CD8-positive, alpha-beta memory T cell (primary cell): ENCODE measurements at regions of chr1 and their contacts with region 1.

Region 1: DNA sequence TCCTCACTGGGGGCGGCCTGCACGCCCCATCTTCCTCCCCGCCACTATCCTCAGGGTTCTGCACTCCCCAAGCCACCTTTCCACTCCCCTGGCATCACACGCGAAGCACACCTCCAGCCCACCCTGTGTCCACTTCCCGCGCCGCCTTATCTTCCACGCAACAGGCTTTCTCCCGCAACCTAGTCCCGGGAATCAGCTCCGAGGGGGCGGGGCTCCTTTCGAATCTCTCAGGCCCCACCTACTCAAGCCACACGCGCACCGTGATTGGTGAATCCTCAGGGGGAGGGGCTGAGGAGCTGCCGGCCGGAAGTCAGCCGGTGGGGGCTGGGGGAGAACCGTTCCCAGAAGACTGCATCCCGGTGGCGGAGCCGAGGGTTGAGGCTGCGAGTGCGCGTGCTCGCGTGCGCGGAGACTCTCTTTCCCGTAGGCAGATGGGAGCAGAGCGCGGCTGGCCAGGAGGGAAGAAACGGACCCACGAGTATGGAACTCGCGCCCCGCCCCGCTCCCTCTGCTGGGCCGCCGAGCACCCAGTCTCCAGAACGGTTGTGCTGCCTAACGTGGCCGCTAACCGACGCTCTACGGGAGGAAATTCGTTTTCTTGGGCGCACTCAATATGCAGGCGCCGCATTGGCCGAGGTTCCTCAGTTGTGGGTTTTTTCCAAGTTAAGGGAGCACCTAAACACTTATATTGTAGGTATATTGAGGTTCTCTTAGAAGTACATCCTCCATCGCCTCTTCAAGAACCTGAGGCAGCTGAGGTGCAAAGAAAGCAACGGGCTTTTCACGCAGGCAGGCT is at the start of gene PSRC1:
- DNase-seq: peak; percentile 85 to 93 (median 90)
- H3K4me3 ChIP-seq: peak within 1 kb of the TSS; percentile 65
- H3K4me3 Mint-ChIP-seq: peak within 1 kb of the TSS; percentile 92 to 99 (median 98)
- H3K27ac ChIP-seq: peak within 1 kb of the TSS; percentile 78
- H3K27ac Mint-ChIP-seq: peak within 1 kb of the TSS; percentile 68 to 95 (median 92)
- H3K4me1 ChIP-seq: peaks cover 5% of the 10 kb centered on the region
- H3K4me1 Mint-ChIP-seq: peaks cover 10 to 22% (median 11%) of the 10 kb centered on the region in 3 donors
- H3K27me3 ChIP-seq: no peaks in the 10 kb centered on the region
- H3K27me3 Mint-ChIP-seq: no peaks in the 10 kb centered on the region
- total RNA-seq, gene PSRC1: 5.4 to 5.8 TPM

Region 2: DNA sequence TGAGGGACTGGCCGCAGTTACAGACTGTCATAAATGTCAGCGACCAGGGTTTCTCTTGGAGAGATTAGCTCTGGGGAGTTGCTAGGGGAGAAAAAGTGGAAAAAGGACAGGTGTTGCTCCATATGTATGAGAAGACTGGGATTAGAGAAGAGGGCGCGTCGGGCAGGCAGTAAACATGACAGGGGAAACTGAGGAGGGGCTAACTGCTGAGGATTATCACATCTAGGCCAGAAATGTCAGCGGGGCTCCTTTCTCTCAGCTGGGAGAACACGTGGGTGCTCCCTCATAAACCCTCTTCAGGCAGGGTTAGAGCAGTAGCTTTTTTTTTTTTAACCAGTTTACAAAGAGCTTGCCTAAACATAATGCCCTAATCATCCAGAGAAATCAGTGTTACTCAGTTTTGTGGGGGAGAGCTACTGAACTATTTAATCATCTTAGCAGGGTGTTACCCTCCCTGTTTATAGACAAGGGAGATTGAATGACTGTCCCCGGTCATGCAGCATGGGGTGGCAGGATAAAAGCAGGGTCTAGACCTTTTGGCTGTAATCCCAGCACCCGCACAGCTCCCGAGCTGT is 134.1 kb before region 1 on chr1:
- CTCF ChIA-PET with region 1: no interaction called
- POLR2A ChIA-PET with region 1: no interaction called
- DNase-seq: no peak
- H3K4me3 ChIP-seq: no peak overlapping the region
- H3K4me3 Mint-ChIP-seq: no peak overlapping the region
- H3K27ac ChIP-seq: no peak overlapping the region
- H3K27ac Mint-ChIP-seq: peak overlapping the region in 2 of 8 donors; percentile 72 to 74
- H3K4me1 ChIP-seq: no peaks in the 10 kb centered on the region
- H3K4me1 Mint-ChIP-seq: no peaks in the 10 kb centered on the region
- H3K27me3 ChIP-seq: no peaks in the 10 kb centered on the region
- H3K27me3 Mint-ChIP-seq: no peaks in the 10 kb centered on the region

Region 3: GRCh38 chr1:109397538-109398342 is 114.6 kb after region 1 on chr1 and contains the start of gene SORT1:
- CTCF ChIA-PET with region 1: interaction called, 53 read pairs
- POLR2A ChIA-PET with region 1: interaction called, 4 read pairs
- DNase-seq: peak; percentile 38 to 78 (median 50)
- H3K4me3 ChIP-seq: peak within 1 kb of the TSS; percentile 30
- H3K4me3 Mint-ChIP-seq: peak within 1 kb of the TSS; percentile 77 to 92 (median 80)
- H3K27ac ChIP-seq: peak within 1 kb of the TSS; percentile 60
- H3K27ac Mint-ChIP-seq: peak within 1 kb of the TSS in 3 of 8 donors; percentile 41 to 67 (median 46)
- H3K4me1 ChIP-seq: peaks cover 10% of the 10 kb centered on the region
- H3K4me1 Mint-ChIP-seq: peaks cover 7 to 18% (median 15%) of the 10 kb centered on the region in 3 donors
- H3K27me3 ChIP-seq: peaks cover 24% of the 10 kb centered on the region
- H3K27me3 Mint-ChIP-seq: peaks cover 33 to 41% of the 10 kb centered on the region in 2 donors
- total RNA-seq, gene SORT1: 3.0 to 3.9 TPM